WTC11 (cell line): ENCODE measurements at regions of chr16 and their contacts with region 1.

Region 1: GRCh38 chr16:85309656-85310587 is 197.7 kb upstream of the CIBAR2 start:
- DNase-seq: no peak
- ATAC-seq: peak; percentile 7
- H3K4me3 Mint-ChIP-seq: no peak overlapping the region
- H3K27ac Mint-ChIP-seq: no peak overlapping the region
- H3K4me1 Mint-ChIP-seq: peaks cover 68% of the 10 kb centered on the region
- H3K27me3 Mint-ChIP-seq: no peaks in the 10 kb centered on the region; the same call in 1 of the 2 replicates
- CTCF ChIP-seq: no peak

Region 2: GRCh38 chr16:85296859-85297660 is 12.9 kb before region 1 on chr16:
- CTCF ChIA-PET with region 1: interaction called, 11 read pairs
- POLR2A ChIA-PET with region 1: no interaction called
- DNase-seq: peak; percentile 78
- ATAC-seq: peak; percentile 93
- H3K4me3 Mint-ChIP-seq: no peak overlapping the region
- H3K27ac Mint-ChIP-seq: no peak overlapping the region
- H3K4me1 Mint-ChIP-seq: peaks cover 17% of the 10 kb centered on the region
- H3K27me3 Mint-ChIP-seq: no peaks in the 10 kb centered on the region
- CTCF ChIP-seq: peak; percentile 71

Region 3: GRCh38 chr16:85376292-85377095 is 66.6 kb after region 1 on chr16:
- CTCF ChIA-PET with region 1: no interaction called
- POLR2A ChIA-PET with region 1: no interaction called
- DNase-seq: no peak
- ATAC-seq: no peak
- H3K4me3 Mint-ChIP-seq: no peak overlapping the region
- H3K27ac Mint-ChIP-seq: no peak overlapping the region
- H3K4me1 Mint-ChIP-seq: peaks cover 2% of the 10 kb centered on the region; the same call in 1 of the 2 replicates
- H3K27me3 Mint-ChIP-seq: no peaks in the 10 kb centered on the region
- CTCF ChIP-seq: no peak

Region 4: GRCh38 chr16:85554112-85554813 is 244.3 kb after region 1 on chr16:
- CTCF ChIA-PET with region 1: no interaction called
- POLR2A ChIA-PET with region 1: no interaction called
- DNase-seq: no peak
- ATAC-seq: peak; percentile 4; the same call in 1 of the 2 replicates
- H3K4me3 Mint-ChIP-seq: peak overlapping the region; percentile 89
- H3K27ac Mint-ChIP-seq: peak overlapping the region; percentile 85
- H3K4me1 Mint-ChIP-seq: peaks cover 44% of the 10 kb centered on the region
- H3K27me3 Mint-ChIP-seq: peaks cover 8% of the 10 kb centered on the region
- CTCF ChIP-seq: no peak